ENCODE measurements at regions of chr3 and their contacts with region 1.

Region 1: GRCh38 chr3:51682079-51682478 is 11.0 kb downstream of the TEX264 start:
- DNase-seq: peak; percentile 49 to 82 (median 81)
- H3K4me3 ChIP-seq: peak overlapping the region; percentile 47
- H3K4me3 Mint-ChIP-seq: peak overlapping the region; percentile 13 to 81 (median 71)
- H3K27ac ChIP-seq: peak overlapping the region; percentile 5
- H3K27ac Mint-ChIP-seq: peak overlapping the region; percentile 59 to 91 (median 85)
- H3K4me1 ChIP-seq: peaks cover 98% of the 10 kb centered on the region
- H3K4me1 Mint-ChIP-seq: peaks cover 73 to 99% (median 97%) of the 10 kb centered on the region in 3 donors
- H3K27me3 ChIP-seq: no peaks in the 10 kb centered on the region
- H3K27me3 Mint-ChIP-seq: peaks cover 0 to 1% of the 10 kb centered on the region in 2 donors

Region 2: GRCh38 chr3:51391075-51391567 is 291.0 kb before region 1 on chr3 and contains the start of gene RBM15B:
- CTCF ChIA-PET with region 1: interaction called, 23 read pairs
- POLR2A ChIA-PET with region 1: interaction called, 3 read pairs
- DNase-seq: peak; percentile 96 to 98 (median 97)
- H3K4me3 ChIP-seq: peak within 1 kb of the TSS; percentile 56
- H3K4me3 Mint-ChIP-seq: peak within 1 kb of the TSS; percentile 79 to 93 (median 83)
- H3K27ac ChIP-seq: peak within 1 kb of the TSS; percentile 61
- H3K27ac Mint-ChIP-seq: peak within 1 kb of the TSS; percentile 88 to 96 (median 92)
- H3K4me1 ChIP-seq: peaks cover 71% of the 10 kb centered on the region
- H3K4me1 Mint-ChIP-seq: peaks cover 54 to 81% (median 66%) of the 10 kb centered on the region in 3 donors
- H3K27me3 ChIP-seq: no peaks in the 10 kb centered on the region
- H3K27me3 Mint-ChIP-seq: no peaks in the 10 kb centered on the region
- total RNA-seq, gene RBM15B: 47.4 to 47.8 TPM

Region 3: DNA sequence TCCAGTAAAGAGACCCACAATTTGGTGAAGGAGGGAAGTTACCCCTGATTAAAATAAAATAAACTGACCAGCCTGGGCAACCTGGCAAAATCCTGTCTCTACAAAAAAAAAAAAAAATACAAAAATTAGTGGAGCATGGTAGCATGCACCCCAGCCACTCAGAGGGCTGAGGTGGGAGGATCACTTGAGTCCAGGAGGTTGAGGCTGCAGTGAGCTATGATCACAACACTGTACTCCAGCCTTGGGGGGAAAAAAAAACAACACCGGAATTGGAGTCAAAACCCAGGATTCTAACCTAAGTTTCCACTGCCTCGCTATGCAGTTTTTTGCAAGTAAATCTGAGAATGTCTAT is 204.7 kb before region 1 on chr3:
- CTCF ChIA-PET with region 1: no interaction called
- POLR2A ChIA-PET with region 1: interaction called, 12 read pairs
- DNase-seq: no peak
- H3K4me3 ChIP-seq: no peak overlapping the region
- H3K4me3 Mint-ChIP-seq: no peak overlapping the region
- H3K27ac ChIP-seq: no peak overlapping the region
- H3K27ac Mint-ChIP-seq: peak overlapping the region in 2 of 8 donors; percentile 17 to 23
- H3K4me1 ChIP-seq: no peaks in the 10 kb centered on the region
- H3K4me1 Mint-ChIP-seq: peaks cover 0 to 4% (median 2%) of the 10 kb centered on the region in 3 donors
- H3K27me3 ChIP-seq: no peaks in the 10 kb centered on the region
- H3K27me3 Mint-ChIP-seq: no peaks in the 10 kb centered on the region

Region 4: GRCh38 chr3:51642462-51642861 is 39.6 kb before region 1 on chr3:
- CTCF ChIA-PET with region 1: interaction called, 31 read pairs
- POLR2A ChIA-PET with region 1: no interaction called
- DNase-seq: peak in 2 of 5 donors; percentile 4 to 7
- H3K4me3 ChIP-seq: no peak overlapping the region
- H3K4me3 Mint-ChIP-seq: no peak overlapping the region
- H3K27ac ChIP-seq: no peak overlapping the region
- H3K27ac Mint-ChIP-seq: peak overlapping the region in 2 of 8 donors; percentile 32 to 66
- H3K4me1 ChIP-seq: no peaks in the 10 kb centered on the region
- H3K4me1 Mint-ChIP-seq: peaks cover 0 to 2% (median 0%) of the 10 kb centered on the region in 3 donors
- H3K27me3 ChIP-seq: no peaks in the 10 kb centered on the region
- H3K27me3 Mint-ChIP-seq: no peaks in the 10 kb centered on the region

Region 5: DNA sequence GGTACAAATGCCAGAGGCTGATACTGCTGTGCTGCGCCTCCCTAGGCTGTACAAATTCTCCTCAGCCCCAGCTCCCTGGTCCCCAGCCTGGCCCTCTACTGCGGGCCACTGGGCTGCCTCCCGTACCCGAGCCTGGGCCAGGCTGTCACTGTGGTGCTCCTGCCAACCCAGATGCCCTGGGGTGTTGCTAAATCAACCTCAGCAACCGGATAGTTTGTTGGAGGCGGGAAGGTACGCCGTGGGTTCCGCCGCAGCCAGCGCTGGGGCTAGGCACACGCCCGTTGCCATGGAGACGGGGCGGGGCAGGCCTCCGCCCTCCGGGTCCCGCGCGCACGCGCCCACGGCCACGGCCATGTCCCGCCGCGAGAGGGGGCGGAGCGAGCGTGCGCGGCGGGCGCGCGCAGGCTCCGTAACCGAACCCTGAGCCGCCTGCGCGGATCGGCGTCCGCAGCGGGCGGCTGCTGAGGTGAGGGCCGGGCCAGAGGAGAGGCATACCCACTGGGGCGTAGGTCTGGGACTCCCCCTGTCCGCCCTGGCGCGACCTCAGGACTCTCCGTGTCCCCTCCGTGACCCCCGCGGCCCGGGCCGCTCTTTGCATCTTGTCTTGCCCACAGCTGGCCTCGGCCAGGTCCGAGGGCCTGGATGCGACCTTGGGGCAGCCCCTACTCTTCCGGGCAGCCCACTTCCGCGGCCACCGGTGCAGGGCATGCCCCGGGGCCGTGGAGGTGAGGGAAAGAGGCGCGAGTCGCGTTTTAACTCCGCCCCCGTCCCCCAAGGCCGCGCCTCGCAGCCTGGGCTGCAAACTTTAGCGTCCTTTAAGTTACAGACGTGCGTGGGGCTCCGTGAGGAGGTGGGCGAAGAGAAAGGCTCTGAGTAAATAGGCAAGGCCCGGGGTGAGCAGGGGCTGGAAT is 11.0 kb before region 1 on chr3 and contains the start of gene TEX264:
- CTCF ChIA-PET with region 1: interaction called, 210 read pairs
- POLR2A ChIA-PET with region 1: interaction called, 26 read pairs
- DNase-seq: peak; percentile 94 to 97 (median 95)
- H3K4me3 ChIP-seq: peak within 1 kb of the TSS; percentile 90
- H3K4me3 Mint-ChIP-seq: peak within 1 kb of the TSS; percentile 84 to 96 (median 91)
- H3K27ac ChIP-seq: peak within 1 kb of the TSS; percentile 96
- H3K27ac Mint-ChIP-seq: peak within 1 kb of the TSS; percentile 88 to 98 (median 92)
- H3K4me1 ChIP-seq: peaks cover 62% of the 10 kb centered on the region
- H3K4me1 Mint-ChIP-seq: peaks cover 62 to 72% (median 65%) of the 10 kb centered on the region in 3 donors
- H3K27me3 ChIP-seq: no peaks in the 10 kb centered on the region
- H3K27me3 Mint-ChIP-seq: peaks cover 0 to 2% of the 10 kb centered on the region in 2 donors
- total RNA-seq, gene TEX264: 48.2 to 52.3 TPM

Measured in CD8-positive, alpha-beta memory T cell (primary cell).